Naive thymus-derived CD4-positive, alpha-beta T cell (primary cell): ENCODE measurements at regions of chr3 and their contacts with region 1.

Region 1: DNA sequence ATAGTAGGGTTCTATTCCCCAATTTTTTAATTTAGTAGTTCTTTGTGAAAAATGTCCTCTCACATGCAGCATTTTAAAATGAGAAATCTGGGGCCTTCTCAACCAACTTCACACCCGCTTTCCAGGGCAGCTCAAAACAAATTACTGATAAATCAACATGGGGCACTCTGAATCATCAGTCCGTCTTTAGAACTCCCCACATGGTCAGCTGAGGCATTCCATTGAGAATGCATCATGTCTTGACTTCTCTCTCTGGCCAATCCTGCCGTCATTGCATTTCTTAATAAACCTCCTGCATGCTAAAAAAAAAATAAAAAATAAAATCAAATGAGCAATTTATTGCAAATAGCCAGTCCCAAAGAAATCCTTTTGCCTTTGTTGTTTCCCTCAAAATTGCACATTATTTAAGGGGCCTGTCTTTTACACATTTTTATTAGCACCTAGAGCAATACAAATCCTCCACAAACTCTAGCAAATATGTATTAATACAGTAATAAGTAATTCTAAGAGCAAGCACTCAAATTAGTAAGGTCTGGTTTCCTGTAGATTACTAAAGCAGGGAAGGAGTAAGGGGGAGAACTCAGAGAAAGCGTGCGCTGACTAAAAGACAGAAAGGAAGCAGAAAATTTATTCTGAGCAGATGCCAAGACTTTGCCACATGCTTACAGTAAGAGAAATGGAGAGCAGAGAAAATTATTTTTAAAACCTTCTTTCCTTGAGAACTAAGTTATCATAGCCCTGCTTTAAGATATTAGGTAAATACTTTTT is 175.7 kb downstream of the TNIK start:
- DNase-seq: no peak
- ATAC-seq: no peak
- H3K4me3 ChIP-seq: no peak overlapping the region
- H3K4me3 Mint-ChIP-seq: peak overlapping the region in 7 of 10 donors; percentile 1 to 65 (median 5)
- H3K27ac ChIP-seq: no peak overlapping the region
- H3K27ac Mint-ChIP-seq: peak overlapping the region in 4 of 9 donors; percentile 28 to 69 (median 46)
- H3K4me1 ChIP-seq: peaks cover 13 to 32% of the 10 kb centered on the region in 2 donors
- H3K4me1 Mint-ChIP-seq: peaks cover 27 to 82% (median 71%) of the 10 kb centered on the region in 7 donors
- H3K27me3 ChIP-seq: no peaks in the 10 kb centered on the region
- H3K27me3 Mint-ChIP-seq: no peaks in the 10 kb centered on the region

Region 2: DNA sequence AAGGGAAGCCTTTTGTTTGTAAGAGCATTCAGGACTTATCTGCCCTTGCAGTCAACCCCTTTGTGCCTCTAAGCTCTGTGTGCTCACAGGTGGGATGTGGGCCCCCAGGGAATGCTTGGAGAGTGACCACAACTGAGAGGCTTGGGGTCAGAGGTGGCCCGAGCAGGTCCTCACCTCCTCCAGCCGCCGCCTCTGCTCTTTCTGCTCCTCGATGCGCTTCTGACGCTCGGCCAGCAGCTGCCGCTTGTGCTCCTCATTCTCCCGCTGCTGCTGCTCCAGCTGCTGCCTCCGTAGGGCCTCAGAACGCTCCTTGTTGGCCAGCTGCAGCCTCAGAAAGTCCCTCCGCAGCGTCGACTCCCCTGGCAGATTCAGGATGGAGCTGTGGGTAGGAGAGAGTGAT is 127.2 kb before region 1 on chr3:
- CTCF ChIA-PET with region 1: no interaction called
- POLR2A ChIA-PET with region 1: no interaction called
- intact Hi-C with region 1: no loop called
- DNase-seq: no peak
- ATAC-seq: no peak
- H3K4me3 ChIP-seq: no peak overlapping the region
- H3K4me3 Mint-ChIP-seq: no peak overlapping the region
- H3K27ac ChIP-seq: no peak overlapping the region
- H3K27ac Mint-ChIP-seq: peak overlapping the region in 1 of 9 donors; percentile 36
- H3K4me1 ChIP-seq: no peaks in the 10 kb centered on the region
- H3K4me1 Mint-ChIP-seq: peaks cover 0 to 22% (median 0%) of the 10 kb centered on the region in 7 donors
- H3K27me3 ChIP-seq: no peaks in the 10 kb centered on the region
- H3K27me3 Mint-ChIP-seq: no peaks in the 10 kb centered on the region

Region 3: DNA sequence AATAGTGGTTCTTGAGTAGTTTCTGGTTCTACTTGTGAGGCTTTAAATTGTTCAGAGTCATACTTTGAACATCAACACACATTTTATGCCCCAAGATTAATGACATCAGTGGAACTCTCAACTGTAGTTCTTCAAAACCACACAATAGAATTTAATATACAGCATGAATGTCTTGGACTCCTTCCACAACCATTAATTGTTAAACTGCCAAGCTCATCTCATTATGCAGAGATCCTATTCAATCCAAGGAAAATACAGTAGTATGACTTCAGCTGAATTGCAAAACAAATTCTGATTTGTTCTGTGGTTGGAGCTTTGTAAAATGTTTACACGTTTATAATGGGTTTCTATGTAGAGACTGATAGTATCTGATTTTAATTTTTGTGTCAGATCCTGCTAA is 58.8 kb before region 1 on chr3:
- CTCF ChIA-PET with region 1: no interaction called
- POLR2A ChIA-PET with region 1: no interaction called
- intact Hi-C with region 1: loop called in 1 of 2 experiments (anchors 2 kb)
- DNase-seq: no peak
- ATAC-seq: no peak
- H3K4me3 ChIP-seq: no peak overlapping the region
- H3K4me3 Mint-ChIP-seq: peak overlapping the region in 2 of 10 donors; percentile 41 to 48
- H3K27ac ChIP-seq: no peak overlapping the region
- H3K27ac Mint-ChIP-seq: peak overlapping the region in 6 of 9 donors; percentile 21 to 73 (median 56)
- H3K4me1 ChIP-seq: peaks cover 6 to 11% of the 10 kb centered on the region in 2 donors
- H3K4me1 Mint-ChIP-seq: peaks cover 3 to 72% (median 60%) of the 10 kb centered on the region in 7 donors
- H3K27me3 ChIP-seq: no peaks in the 10 kb centered on the region
- H3K27me3 Mint-ChIP-seq: no peaks in the 10 kb centered on the region

Region 4: DNA sequence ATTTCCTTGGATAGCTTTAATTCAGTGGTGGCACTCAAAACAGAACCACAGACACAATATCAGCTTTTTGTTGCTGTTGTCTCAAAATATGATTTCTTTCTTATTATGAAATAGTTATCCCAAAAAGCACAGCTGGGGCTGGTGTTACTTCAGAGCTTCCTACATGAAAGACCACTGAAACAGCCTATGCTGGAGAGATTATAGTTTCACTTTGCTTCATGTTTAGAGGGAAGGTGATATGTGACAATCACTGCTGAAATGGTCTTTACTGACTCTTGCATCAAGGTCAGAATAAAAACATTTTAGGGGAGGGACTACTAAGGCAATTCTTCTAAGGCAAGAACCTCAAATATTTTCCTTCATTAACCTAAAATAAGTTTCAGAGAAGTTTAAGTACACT is 14.9 kb before region 1 on chr3:
- CTCF ChIA-PET with region 1: interaction called, 5 read pairs
- POLR2A ChIA-PET with region 1: interaction called, 4 read pairs
- intact Hi-C with region 1: loop called (anchors 1 kb)
- DNase-seq: peak in 3 of 9 donors; percentile 34 to 50 (median 44)
- ATAC-seq: peak; percentile 76
- H3K4me3 ChIP-seq: peak overlapping the region; percentile 3
- H3K4me3 Mint-ChIP-seq: peak overlapping the region; percentile 13 to 85 (median 60)
- H3K27ac ChIP-seq: peak overlapping the region; percentile 52
- H3K27ac Mint-ChIP-seq: peak overlapping the region in 8 of 9 donors; percentile 65 to 93 (median 84)
- H3K4me1 ChIP-seq: peaks cover 32 to 44% of the 10 kb centered on the region in 2 donors
- H3K4me1 Mint-ChIP-seq: peaks cover 43 to 95% (median 88%) of the 10 kb centered on the region in 7 donors
- H3K27me3 ChIP-seq: no peaks in the 10 kb centered on the region
- H3K27me3 Mint-ChIP-seq: no peaks in the 10 kb centered on the region

Region 5: DNA sequence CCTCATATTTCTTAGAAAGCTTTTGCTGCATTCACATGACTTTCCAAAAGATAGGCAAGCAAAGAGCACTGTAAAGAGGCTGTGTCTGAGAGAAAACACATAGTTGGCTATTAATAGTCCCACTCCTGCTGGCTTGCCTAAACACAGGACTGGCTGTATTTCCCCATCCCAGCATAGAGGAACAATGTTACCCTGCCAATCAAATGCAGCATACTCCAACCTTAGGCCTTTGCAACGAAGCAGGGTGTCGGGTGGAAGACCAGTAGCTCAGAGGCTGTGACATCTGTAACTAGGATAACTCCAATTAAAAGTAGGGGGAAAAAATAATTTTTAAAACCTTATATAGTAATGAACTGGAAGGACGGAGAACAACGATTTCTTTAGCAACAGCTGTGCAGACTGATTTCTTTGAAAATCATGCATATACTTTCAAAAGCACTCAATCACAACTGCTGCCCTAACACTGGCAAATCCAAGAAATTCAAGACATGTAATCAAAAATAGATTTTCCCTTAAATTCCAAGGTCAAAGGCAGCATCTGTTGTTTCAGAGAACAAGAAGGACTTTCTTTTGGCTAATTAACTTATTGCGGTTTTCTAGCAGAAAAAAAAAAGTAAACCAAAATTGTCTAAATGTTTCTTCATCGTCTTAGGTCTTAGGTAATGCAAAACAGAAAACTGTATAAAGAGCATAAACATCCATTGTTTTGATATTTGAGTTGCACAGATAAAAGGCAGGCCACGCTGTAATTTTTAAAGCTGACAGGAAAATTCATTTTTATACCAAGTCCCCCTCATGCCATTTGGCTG is 36.5 kb after region 1 on chr3:
- CTCF ChIA-PET with region 1: no interaction called
- POLR2A ChIA-PET with region 1: no interaction called
- intact Hi-C with region 1: no loop called
- DNase-seq: no peak
- ATAC-seq: no peak
- H3K4me3 ChIP-seq: no peak overlapping the region
- H3K4me3 Mint-ChIP-seq: no peak overlapping the region
- H3K27ac ChIP-seq: no peak overlapping the region
- H3K27ac Mint-ChIP-seq: no peak overlapping the region
- H3K4me1 ChIP-seq: peaks cover 0 to 7% of the 10 kb centered on the region in 2 donors
- H3K4me1 Mint-ChIP-seq: peaks cover 20 to 66% (median 46%) of the 10 kb centered on the region in 7 donors
- H3K27me3 ChIP-seq: no peaks in the 10 kb centered on the region
- H3K27me3 Mint-ChIP-seq: no peaks in the 10 kb centered on the region

Region 6: GRCh38 chr3:171363202-171363601 is 78.7 kb after region 1 on chr3:
- CTCF ChIA-PET with region 1: no interaction called
- POLR2A ChIA-PET with region 1: interaction called, 3 read pairs
- intact Hi-C with region 1: loop called in 1 of 2 experiments (anchors 5 kb)
- DNase-seq: no peak
- ATAC-seq: no peak
- H3K4me3 ChIP-seq: no peak overlapping the region
- H3K4me3 Mint-ChIP-seq: peak overlapping the region in 2 of 10 donors; percentile 4 to 13
- H3K27ac ChIP-seq: no peak overlapping the region
- H3K27ac Mint-ChIP-seq: no peak overlapping the region
- H3K4me1 ChIP-seq: peaks cover 0 to 15% of the 10 kb centered on the region in 2 donors
- H3K4me1 Mint-ChIP-seq: peaks cover 20 to 87% (median 76%) of the 10 kb centered on the region in 7 donors
- H3K27me3 ChIP-seq: no peaks in the 10 kb centered on the region
- H3K27me3 Mint-ChIP-seq: no peaks in the 10 kb centered on the region

Region 7: GRCh38 chr3:171561596-171562323 is 277.3 kb after region 1 on chr3:
- CTCF ChIA-PET with region 1: no interaction called
- POLR2A ChIA-PET with region 1: no interaction called
- intact Hi-C with region 1: loop called in 1 of 2 experiments (anchors 5 kb)
- DNase-seq: peak in 1 of 9 donors; percentile 4
- ATAC-seq: no peak
- H3K4me3 ChIP-seq: no peak overlapping the region
- H3K4me3 Mint-ChIP-seq: peak overlapping the region in 4 of 10 donors; percentile 8 to 83 (median 14)
- H3K27ac ChIP-seq: no peak overlapping the region
- H3K27ac Mint-ChIP-seq: peak overlapping the region in 7 of 9 donors; percentile 29 to 97 (median 65)
- H3K4me1 ChIP-seq: peaks cover 1 to 4% of the 10 kb centered on the region in 2 donors
- H3K4me1 Mint-ChIP-seq: peaks cover 8 to 69% (median 16%) of the 10 kb centered on the region in 7 donors
- H3K27me3 ChIP-seq: no peaks in the 10 kb centered on the region
- H3K27me3 Mint-ChIP-seq: no peaks in the 10 kb centered on the region

Region 8: DNA sequence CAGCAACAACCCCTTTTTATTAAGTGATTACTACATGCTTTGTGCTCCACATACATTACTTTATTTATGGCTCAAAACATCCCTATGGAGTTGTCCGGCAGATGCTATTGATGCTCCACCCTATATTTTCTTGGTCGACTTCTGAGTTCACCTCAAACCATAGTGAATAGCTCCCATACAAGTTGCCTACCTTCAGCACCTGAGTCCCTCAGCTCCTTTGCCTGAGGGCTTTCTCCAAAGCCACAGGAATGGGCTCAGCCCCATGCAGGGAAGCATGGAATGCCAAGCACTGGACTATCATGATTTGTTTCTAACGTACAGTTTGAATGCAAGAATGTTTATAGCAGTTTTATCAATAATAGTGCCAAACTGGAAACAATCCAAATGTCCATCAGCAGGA is 300.5 kb after region 1 on chr3:
- CTCF ChIA-PET with region 1: no interaction called
- POLR2A ChIA-PET with region 1: no interaction called
- intact Hi-C with region 1: no loop called
- DNase-seq: no peak
- ATAC-seq: no peak
- H3K4me3 ChIP-seq: no peak overlapping the region
- H3K4me3 Mint-ChIP-seq: no peak overlapping the region
- H3K27ac ChIP-seq: no peak overlapping the region
- H3K27ac Mint-ChIP-seq: no peak overlapping the region
- H3K4me1 ChIP-seq: no peaks in the 10 kb centered on the region
- H3K4me1 Mint-ChIP-seq: no peaks in the 10 kb centered on the region
- H3K27me3 ChIP-seq: no peaks in the 10 kb centered on the region
- H3K27me3 Mint-ChIP-seq: peaks cover 0 to 19% (median 0%) of the 10 kb centered on the region in 5 donors